ENCODE measurements at regions of chr2 and their contacts with region 1.

Region 1: DNA sequence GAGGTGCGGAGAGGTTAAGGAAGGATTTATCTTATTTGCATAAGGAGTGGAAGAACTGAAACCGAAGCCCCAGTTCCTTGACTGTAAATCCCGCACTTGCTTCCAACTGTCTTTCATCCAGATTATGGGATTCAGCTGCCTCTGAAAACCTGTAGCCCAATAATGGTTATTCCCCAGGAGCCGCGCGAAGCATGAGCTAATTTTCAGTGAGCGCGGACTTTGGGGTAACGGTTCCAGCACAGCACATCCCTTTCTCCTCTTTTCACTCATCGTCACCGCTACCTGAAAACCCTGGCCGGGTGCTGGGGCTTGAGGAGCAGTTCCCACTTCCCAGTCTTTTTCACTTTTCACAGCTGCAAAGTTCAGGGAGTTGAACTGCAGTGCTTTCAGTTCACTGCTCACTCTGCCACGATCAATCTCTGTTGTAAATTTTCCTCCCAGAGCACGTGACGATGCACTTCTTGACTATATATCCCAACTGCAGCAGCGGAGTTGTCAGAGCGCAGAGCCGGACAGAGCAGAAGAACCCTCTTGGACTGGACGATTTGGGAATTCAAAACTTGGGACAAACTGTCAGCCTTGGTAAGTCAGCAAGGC is at the start of gene KCNE4:
- DNase-seq: no peak
- total RNA-seq, gene KCNE4: 1.7 TPM

Region 2: DNA sequence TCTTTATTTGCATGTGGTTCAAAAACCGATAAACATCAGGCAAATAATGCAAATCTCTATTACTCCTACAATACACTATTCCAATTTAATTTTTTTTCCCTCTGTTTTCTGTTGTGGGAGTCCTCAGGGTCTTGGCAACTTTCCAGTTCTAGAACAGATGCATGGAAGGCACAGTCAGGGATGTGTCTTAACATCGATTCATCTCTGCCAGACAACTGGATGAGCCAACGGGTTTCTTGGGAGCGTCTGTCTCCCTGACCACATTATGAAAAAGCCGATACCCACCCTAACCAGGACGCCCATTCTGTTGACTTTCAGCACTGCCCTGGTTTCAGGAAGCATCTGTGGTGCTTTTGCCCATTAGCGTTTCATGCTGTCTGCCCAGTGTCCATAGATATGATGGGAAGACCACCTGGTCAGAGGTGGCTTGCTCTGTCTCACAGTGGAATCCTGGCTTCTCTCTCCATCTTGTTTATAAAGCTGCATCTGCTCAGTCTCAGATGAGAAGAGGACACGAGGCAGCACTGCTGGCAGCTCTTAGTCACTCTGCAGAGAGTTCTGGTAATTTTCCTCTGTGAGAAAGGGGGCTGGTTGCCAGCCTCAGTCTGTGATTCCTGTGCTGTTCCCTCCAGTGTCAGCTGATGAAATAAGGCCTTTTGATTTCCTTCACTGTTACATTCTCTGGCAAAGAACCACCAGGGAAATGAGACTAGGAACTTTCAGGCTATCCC is 57.7 kb before region 1 on chr2:
- intact Hi-C with region 1: loop called (anchors 2 kb)
- DNase-seq: peak; percentile 84

Region 3: GRCh38 chr2:223093436-223094241 is 41.8 kb after region 1 on chr2:
- intact Hi-C with region 1: loop called (anchors 5 kb)
- DNase-seq: peak; percentile 83

Region 4: GRCh38 chr2:223613017-223613950 is 561.5 kb after region 1 on chr2:
- intact Hi-C with region 1: loop called (anchors 10 kb)
- DNase-seq: peak; percentile 89

Measured in cardiac septum (tissue), 1 donor.